Posterior cingulate gyrus (tissue), 11 donors: ENCODE measurements at regions of chr2 and their contacts with region 1.

Region 1: DNA sequence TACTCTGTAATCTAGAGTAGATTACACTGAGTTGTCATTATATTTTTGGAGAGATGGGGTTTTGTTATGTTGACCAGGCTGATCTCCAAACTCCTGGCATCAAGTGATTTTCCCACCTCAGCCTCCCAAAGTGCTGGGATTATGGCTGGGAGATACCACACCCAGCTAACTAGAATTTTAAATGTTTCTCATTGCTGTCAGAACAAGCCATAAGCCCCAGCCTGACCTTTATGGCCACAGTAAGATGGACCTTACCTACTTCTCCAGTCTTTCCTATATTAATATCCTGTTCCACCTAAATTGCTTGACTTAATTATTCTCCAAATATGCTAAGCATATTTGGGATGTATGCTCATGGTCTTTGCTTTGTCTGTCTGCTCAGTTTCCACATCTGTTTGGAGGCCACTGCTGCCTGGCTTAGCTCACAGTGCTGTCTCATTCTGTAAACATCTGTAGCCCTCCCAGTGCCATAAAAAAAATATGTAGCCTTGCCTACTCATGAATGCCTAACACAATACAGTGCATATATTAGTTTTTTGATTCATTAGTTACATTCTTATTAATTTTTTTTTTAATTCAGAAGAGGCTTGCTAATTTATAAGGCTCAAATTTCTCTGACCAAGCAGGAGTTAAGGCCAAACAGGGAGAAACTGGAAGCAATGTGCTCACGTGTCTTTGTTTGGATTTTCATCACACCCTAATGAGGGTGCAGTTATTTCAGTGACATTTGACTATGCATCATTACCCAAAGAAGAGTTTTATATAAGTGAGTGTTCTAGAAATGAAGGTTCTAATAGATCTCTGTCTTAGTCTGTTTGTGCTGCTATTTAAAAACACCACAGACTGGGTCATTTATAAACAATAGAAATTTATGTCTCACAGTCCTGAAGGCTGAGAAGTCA is 45.3 kb upstream of the PSME4 start:
- DNase-seq: no peak

Region 2: GRCh38 chr2:53987336-53987921 is 28.6 kb before region 1 on chr2:
- intact Hi-C with region 1: loop called (anchors 5 kb)
- DNase-seq: no peak

Region 3: GRCh38 chr2:54321047-54321446 is 305.0 kb after region 1 on chr2:
- intact Hi-C with region 1: no loop called
- DNase-seq: no peak